ENCODE measurements at regions of chr2 and their contacts with region 1.

Region 1: GRCh38 chr2:4164236-4164635 is 460.9 kb downstream of the DCDC2C start:
- DNase-seq: no peak
- H3K4me3 ChIP-seq: no peak overlapping the region
- H3K4me3 Mint-ChIP-seq: no peak overlapping the region
- H3K27ac ChIP-seq: no peak overlapping the region
- H3K27ac Mint-ChIP-seq: no peak overlapping the region
- H3K4me1 ChIP-seq: no peaks in the 10 kb centered on the region
- H3K4me1 Mint-ChIP-seq: no peaks in the 10 kb centered on the region
- H3K27me3 ChIP-seq: no peaks in the 10 kb centered on the region
- H3K27me3 Mint-ChIP-seq: peaks cover 0 to 2% (median 0%) of the 10 kb centered on the region in 3 donors
- CTCF ChIP-seq: no peak

Region 2: DNA sequence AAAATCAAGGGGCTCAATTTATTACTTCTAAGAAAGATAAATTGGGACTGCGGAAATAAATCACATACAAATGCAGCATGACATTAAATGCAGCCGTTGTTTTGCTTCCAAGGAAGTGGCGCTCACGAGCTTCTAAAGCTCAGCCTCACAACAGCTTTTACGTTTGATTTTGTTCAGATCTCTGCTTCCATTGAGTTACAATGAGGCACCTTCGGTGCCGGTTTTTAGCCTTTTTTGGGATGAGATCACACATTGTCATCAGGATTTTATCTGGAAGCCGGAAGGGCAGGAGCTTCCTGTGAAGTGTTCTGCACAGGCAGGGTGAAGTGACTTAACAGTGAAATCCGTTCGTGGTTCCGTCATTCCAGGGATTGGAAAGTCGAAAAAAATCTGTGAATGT is 251.1 kb before region 1 on chr2:
- intact Hi-C with region 1: no loop called
- DNase-seq: no peak
- H3K4me3 ChIP-seq: no peak overlapping the region
- H3K4me3 Mint-ChIP-seq: no peak overlapping the region
- H3K27ac ChIP-seq: no peak overlapping the region
- H3K27ac Mint-ChIP-seq: no peak overlapping the region
- H3K4me1 ChIP-seq: no peaks in the 10 kb centered on the region
- H3K4me1 Mint-ChIP-seq: no peaks in the 10 kb centered on the region
- H3K27me3 ChIP-seq: no peaks in the 10 kb centered on the region
- H3K27me3 Mint-ChIP-seq: peaks cover 0 to 4% (median 2%) of the 10 kb centered on the region in 3 donors
- CTCF ChIP-seq: no peak

Region 3: GRCh38 chr2:4175343-4175742 is 11.1 kb after region 1 on chr2:
- intact Hi-C with region 1: loop called in 1 of 2 experiments (anchors 1 kb)
- DNase-seq: no peak
- H3K4me3 ChIP-seq: peak overlapping the region in 1 of 3 experiments; percentile 25
- H3K4me3 Mint-ChIP-seq: no peak overlapping the region
- H3K27ac ChIP-seq: no peak overlapping the region
- H3K27ac Mint-ChIP-seq: no peak overlapping the region
- H3K4me1 ChIP-seq: no peaks in the 10 kb centered on the region
- H3K4me1 Mint-ChIP-seq: no peaks in the 10 kb centered on the region
- H3K27me3 ChIP-seq: no peaks in the 10 kb centered on the region
- H3K27me3 Mint-ChIP-seq: no peaks in the 10 kb centered on the region
- CTCF ChIP-seq: no peak

Measured in CD14-positive monocyte (primary cell).